Common myeloid progenitor, CD34-positive (primary cell): ENCODE measurements at regions of chr18 and their contacts with region 1.

Region 1: DNA sequence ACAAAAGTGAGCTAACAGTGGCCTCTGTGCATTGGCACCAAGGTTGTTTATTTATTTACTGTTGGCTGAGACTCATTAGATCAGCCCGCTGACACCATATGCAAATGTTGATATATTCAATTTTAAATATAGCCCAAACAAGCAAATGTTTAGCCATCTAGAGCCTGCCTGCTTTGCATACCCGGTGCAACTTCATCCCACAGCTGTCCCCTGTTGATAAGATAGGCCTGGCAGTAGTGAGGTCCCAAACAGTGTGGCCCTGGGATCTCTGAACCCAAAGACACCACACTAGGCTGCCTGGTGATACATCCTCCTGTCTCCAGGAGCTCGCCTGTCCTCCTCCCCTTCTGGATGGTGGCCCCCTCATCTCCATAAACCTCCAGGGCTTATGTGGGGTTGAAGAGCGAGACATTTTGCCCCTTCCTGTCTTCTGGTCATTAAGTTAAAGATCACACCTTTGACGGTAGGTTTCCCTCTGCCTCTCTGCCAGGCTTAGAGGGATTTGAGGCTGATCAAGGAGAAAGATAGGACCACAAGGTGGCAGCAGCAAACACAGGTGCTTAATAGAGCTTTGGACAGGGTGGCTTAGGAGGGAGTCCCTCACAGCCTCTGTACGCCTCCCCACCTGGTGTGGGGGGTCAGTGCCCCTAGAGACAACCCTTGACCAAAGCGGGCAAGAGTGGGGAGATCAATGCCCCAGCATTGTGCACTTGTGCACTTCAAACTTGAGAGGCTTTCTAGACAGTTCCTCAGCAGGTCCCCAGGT is 23.7 kb upstream of the MYO5B start:
- DNase-seq: peak; percentile 45 to 62 (median 52)
- H3K4me3 ChIP-seq: no peak overlapping the region
- H3K27ac ChIP-seq: no peak overlapping the region
- H3K4me1 ChIP-seq: no peaks in the 10 kb centered on the region
- H3K27me3 ChIP-seq: peaks cover 0 to 25% (median 5%) of the 10 kb centered on the region in 5 experiments

Region 2: DNA sequence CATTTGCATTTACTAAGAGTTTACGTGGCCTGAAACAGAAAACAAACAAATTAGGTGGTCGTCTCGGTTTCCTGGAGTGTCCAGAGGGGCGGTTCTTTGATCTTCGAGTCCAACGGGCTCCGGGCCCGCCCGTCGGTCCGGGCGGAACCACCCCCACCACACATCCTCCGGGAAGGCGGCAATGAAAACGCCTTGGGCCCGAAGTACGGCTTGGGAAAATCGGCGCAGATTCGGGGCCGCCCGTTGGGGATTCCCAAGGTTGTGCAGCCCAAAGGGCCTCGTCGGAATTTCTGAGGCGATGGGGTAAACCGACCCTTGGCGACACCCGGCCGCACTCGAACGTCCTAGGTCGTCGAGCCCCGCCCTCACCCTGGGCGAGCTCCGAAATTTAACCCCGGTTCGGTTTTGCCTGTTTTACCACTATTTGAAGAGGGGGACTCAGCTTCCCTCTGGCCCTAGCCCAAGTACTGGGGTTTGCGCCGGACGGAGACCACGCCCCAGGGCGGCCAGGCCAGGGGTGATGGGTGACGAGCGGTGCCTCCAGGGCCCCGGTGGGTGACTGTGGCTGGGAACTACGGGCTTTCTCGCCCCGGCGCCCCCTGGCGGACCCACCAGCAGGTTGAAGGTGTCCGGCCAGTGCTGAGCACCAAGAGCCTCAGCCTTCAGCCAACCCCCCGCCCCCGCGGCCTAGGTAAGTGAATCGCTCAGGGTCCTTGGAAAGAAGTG is 49.6 kb after region 1 on chr18:
- CTCF ChIA-PET with region 1: interaction called, 12 read pairs
- POLR2A ChIA-PET with region 1: no interaction called
- DNase-seq: peak; percentile 80
- H3K4me3 ChIP-seq: peak overlapping the region in 6 of 7 experiments; percentile 29 to 91 (median 78)
- H3K27ac ChIP-seq: peak overlapping the region in 1 of 2 experiments; percentile 37
- H3K4me1 ChIP-seq: peaks cover 0 to 24% (median 12%) of the 10 kb centered on the region in 4 experiments
- H3K27me3 ChIP-seq: no peaks in the 10 kb centered on the region

Region 3: GRCh38 chr18:50429207-50429948 is 210.8 kb after region 1 on chr18:
- CTCF ChIA-PET with region 1: interaction called, 15 read pairs
- POLR2A ChIA-PET with region 1: no interaction called
- DNase-seq: peak; percentile 20 to 42 (median 32)
- H3K4me3 ChIP-seq: no peak overlapping the region
- H3K27ac ChIP-seq: no peak overlapping the region
- H3K4me1 ChIP-seq: no peaks in the 10 kb centered on the region
- H3K27me3 ChIP-seq: peaks cover 0 to 5% (median 0%) of the 10 kb centered on the region in 5 experiments